Dorsolateral prefrontal cortex (tissue), 120 donors: ENCODE measurements at regions of chr17 and their contacts with region 1.

Region 1: DNA sequence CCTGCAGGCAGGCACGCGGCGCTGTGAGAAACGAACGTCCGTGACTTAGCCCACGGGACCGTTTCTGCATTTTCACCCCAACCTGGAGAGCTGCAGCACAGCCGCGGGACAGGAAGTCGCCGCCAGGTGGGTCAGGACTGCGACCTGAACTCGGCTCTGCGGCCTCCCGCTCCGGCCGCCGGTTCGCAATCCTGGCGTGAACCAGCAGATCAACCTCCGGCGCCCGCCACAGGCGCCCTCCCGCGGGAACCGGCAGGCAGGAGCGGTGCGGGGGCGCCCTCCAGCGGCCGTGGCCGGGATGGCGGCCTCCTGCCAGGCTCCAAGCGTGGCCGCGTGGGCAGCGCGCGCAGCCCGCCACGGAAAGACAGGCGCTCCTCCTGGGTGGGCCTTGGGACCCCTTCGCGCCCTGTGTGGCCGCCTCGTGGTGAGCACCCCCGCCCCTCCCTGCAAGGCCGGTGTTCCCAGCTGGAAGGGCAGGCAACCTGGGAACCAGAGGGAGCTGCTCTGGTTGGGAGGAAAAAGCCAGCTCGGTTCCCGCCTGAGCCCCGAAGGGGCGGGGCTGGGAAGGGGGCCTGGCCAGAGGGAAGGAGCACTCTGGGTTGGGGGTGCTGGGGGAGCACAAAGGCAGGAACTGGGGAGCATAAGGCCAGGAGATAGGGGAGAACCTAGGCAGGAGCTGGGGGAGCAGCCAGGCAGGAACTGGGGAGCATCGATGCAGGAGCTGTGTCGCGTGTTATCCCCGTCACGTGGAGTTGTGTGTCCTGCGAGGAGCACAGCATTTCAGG is 28.2 kb downstream of the ACTG1 start:
- DNase-seq: peak; percentile 71 to 93 (median 88)
- H3K4me3 ChIP-seq: peak overlapping the region; percentile 36 to 71 (median 61)
- H3K27ac ChIP-seq: peak overlapping the region in 33 of 59 donors; percentile 1 to 85 (median 51)
- H3K27me3 ChIP-seq: no peaks in the 10 kb centered on the region
- CTCF ChIP-seq: peak in 55 of 56 donors; percentile 81 to 100 (median 99)

Region 2: GRCh38 chr17:81253358-81254131 is 230.8 kb before region 1 on chr17:
- intact Hi-C with region 1: loop called (anchors 1 to 2 kb)
- DNase-seq: peak in 7 of 10 donors; percentile 34 to 71 (median 61)
- H3K4me3 ChIP-seq: no peak overlapping the region
- H3K27ac ChIP-seq: peak overlapping the region in 6 of 59 donors; percentile 4 to 81 (median 38)
- H3K27me3 ChIP-seq: no peaks in the 10 kb centered on the region
- CTCF ChIP-seq: peak; percentile 68 to 92 (median 84)

Region 3: GRCh38 chr17:81394921-81395599 is 89.3 kb before region 1 on chr17 and contains the start of gene BAHCC1:
- intact Hi-C with region 1: loop called (anchors 2 to 5 kb)
- DNase-seq: peak; percentile 100
- H3K4me3 ChIP-seq: peak within 1 kb of the TSS; percentile 65 to 91 (median 81)
- H3K27ac ChIP-seq: peak within 1 kb of the TSS; percentile 79 to 100 (median 99)
- H3K27me3 ChIP-seq: no peaks in the 10 kb centered on the region
- CTCF ChIP-seq: peak in 17 of 56 donors; percentile 9 to 40 (median 19)
- total RNA-seq, gene BAHCC1: 25.1 to 66.1 (median 38.0) TPM

Region 4: GRCh38 chr17:81428948-81429774 is 55.2 kb before region 1 on chr17:
- intact Hi-C with region 1: loop called (anchors 2 to 5 kb)
- DNase-seq: peak; percentile 76 to 92 (median 84)
- H3K4me3 ChIP-seq: peak overlapping the region in 43 of 59 donors; percentile 1 to 51 (median 30)
- H3K27ac ChIP-seq: peak overlapping the region in 54 of 59 donors; percentile 27 to 97 (median 88)
- H3K27me3 ChIP-seq: no peaks in the 10 kb centered on the region
- CTCF ChIP-seq: peak in 1 of 56 donors; percentile 6

Region 5: GRCh38 chr17:81601525-81602120 is 117.2 kb after region 1 on chr17:
- intact Hi-C with region 1: loop called in 1 of 2 experiments (anchors 2 kb)
- DNase-seq: peak in 2 of 10 donors; percentile 41 to 54
- H3K4me3 ChIP-seq: no peak overlapping the region
- H3K27ac ChIP-seq: peak overlapping the region in 21 of 59 donors; percentile 2 to 69 (median 23)
- H3K27me3 ChIP-seq: no peaks in the 10 kb centered on the region
- CTCF ChIP-seq: peak; percentile 61 to 90 (median 77)